Adrenal gland (tissue), 19 donors: ENCODE measurements at regions of chr15 and their contacts with region 1.

Region 1: GRCh38 chr15:78909791-78910228 is 35.0 kb downstream of the CTSH start:
- DNase-seq: peak in 2 of 7 donors; percentile 54 to 66
- H3K4me3 ChIP-seq: no peak overlapping the region
- H3K27ac ChIP-seq: no peak overlapping the region
- H3K4me1 ChIP-seq: peaks cover 18 to 40% of the 10 kb centered on the region in 2 donors
- H3K27me3 ChIP-seq: no peaks in the 10 kb centered on the region
- CTCF ChIP-seq: peak; percentile 51 to 72 (median 66)
- POLR2A ChIP-seq: no peak

Region 2: GRCh38 chr15:78615151-78615589 is 294.6 kb before region 1 on chr15:
- intact Hi-C with region 1: no loop called
- DNase-seq: peak in 3 of 7 donors; percentile 7 to 31 (median 13)
- H3K4me3 ChIP-seq: no peak overlapping the region
- H3K27ac ChIP-seq: no peak overlapping the region
- H3K4me1 ChIP-seq: peaks cover 0 to 3% of the 10 kb centered on the region in 2 donors
- H3K27me3 ChIP-seq: peaks cover 15% of the 10 kb centered on the region
- CTCF ChIP-seq: no peak
- POLR2A ChIP-seq: no peak

Region 3: GRCh38 chr15:78739996-78740903 is 169.6 kb before region 1 on chr15:
- intact Hi-C with region 1: no loop called
- DNase-seq: peak; percentile 54 to 88 (median 84)
- H3K4me3 ChIP-seq: no peak overlapping the region
- H3K27ac ChIP-seq: no peak overlapping the region
- H3K4me1 ChIP-seq: no peaks in the 10 kb centered on the region
- H3K27me3 ChIP-seq: no peaks in the 10 kb centered on the region
- CTCF ChIP-seq: peak in 4 of 6 experiments; percentile 17 to 45 (median 39)
- POLR2A ChIP-seq: no peak

Region 4: GRCh38 chr15:78979456-78980320 is 69.9 kb after region 1 on chr15:
- intact Hi-C with region 1: loop called (anchors 5 kb)
- DNase-seq: peak; percentile 79 to 92 (median 88)
- H3K4me3 ChIP-seq: no peak overlapping the region
- H3K27ac ChIP-seq: no peak overlapping the region
- H3K4me1 ChIP-seq: peaks cover 5 to 6% of the 10 kb centered on the region in 2 donors
- H3K27me3 ChIP-seq: no peaks in the 10 kb centered on the region
- CTCF ChIP-seq: peak; percentile 72 to 84 (median 79)
- POLR2A ChIP-seq: no peak

Region 5: DNA sequence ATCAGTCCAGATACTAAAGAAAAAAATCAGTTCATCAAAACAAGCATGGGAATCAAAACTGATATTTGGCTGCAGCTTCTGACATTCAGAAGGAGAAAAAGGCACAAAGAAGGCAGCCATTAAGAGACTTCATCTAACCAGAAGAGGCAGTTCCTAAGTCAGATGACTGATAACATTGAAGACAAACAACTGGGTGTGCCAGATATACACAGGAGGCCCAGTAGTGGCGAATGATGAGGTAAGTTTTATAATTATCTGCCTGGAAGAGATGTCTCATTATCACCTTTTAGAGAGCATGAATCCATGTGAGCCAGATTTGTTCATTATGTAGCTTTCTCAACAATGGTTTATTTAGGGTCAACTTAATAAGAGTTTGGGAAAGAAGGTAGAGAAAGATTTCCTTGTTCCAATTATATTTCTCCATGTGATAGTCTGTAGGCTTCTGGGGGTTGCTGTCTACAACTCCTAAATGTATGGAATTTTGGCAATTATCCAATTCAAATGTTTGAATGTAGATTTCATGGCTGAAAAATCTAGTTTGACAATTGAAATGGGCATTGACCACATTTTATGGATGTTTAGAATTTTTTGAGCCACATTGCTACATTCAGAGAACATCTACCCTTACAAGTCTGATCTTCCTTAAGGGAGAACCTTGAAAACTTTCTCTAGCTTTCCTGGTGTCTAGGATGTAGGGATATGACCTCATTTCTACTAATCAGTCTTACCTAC is 231.2 kb after region 1 on chr15:
- intact Hi-C with region 1: no loop called
- DNase-seq: no peak
- H3K4me3 ChIP-seq: no peak overlapping the region
- H3K27ac ChIP-seq: no peak overlapping the region
- H3K4me1 ChIP-seq: no peaks in the 10 kb centered on the region
- H3K27me3 ChIP-seq: no peaks in the 10 kb centered on the region
- CTCF ChIP-seq: no peak
- POLR2A ChIP-seq: no peak

Region 6: DNA sequence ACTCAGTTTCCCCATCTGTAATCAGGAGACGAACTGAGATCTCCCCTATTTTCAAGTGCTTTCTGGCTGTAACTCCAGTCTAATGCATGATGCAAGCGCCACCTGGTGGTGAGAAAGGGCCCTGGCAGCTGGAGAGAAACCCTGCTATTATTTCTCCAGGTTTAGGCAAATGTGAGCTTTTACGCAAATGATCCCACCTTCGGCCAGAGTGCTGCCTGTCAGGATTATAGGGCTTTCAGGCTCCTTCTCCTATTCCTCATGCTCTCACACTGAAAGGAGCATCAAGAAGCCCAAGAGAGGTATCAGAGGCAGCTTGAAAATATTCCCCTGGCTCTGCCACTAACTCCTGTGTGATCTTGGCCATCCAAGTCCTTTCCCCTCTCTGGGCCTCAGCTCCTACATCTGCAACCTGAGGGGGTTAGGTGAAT is 274.7 kb after region 1 on chr15:
- intact Hi-C with region 1: loop called in 1 of 2 experiments (anchors 10 kb)
- DNase-seq: peak; percentile 63 to 92 (median 78)
- H3K4me3 ChIP-seq: no peak overlapping the region
- H3K27ac ChIP-seq: no peak overlapping the region
- H3K4me1 ChIP-seq: no peaks in the 10 kb centered on the region
- H3K27me3 ChIP-seq: no peaks in the 10 kb centered on the region
- CTCF ChIP-seq: peak; percentile 89 to 100 (median 93)
- POLR2A ChIP-seq: no peak

Region 7: DNA sequence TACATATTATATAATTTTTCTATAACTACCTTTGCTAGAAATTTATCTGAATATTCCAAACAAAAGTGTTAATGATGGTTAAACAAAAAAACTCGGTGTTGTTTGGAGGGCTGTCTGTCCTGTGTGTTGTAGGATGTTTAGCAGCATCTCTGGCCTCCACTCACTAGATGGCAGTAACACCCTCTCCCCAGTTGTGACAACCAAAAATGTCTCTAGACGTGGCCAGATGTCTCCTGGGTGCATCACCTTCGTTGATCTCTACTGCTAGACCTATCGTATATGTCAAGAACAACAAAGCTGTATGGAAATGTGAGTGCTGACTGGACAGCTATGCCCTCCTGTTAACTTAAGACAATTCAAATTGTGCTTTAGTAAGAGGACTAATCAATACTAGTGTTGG is 386.8 kb after region 1 on chr15:
- intact Hi-C with region 1: no loop called
- DNase-seq: no peak
- H3K4me3 ChIP-seq: no peak overlapping the region
- H3K27ac ChIP-seq: no peak overlapping the region
- H3K4me1 ChIP-seq: no peaks in the 10 kb centered on the region
- H3K27me3 ChIP-seq: peaks cover 14% of the 10 kb centered on the region
- CTCF ChIP-seq: no peak
- POLR2A ChIP-seq: no peak